Activated T-helper 2 cell treated with anti-CD3 and anti-CD28 coated beads, Interferon-gamma antibody, Interleukin-2, Interleukin-4, amounts not matched to agents 10 μg/mL and 5 μg/mL and 100 μg/mL, durations not matched to agents 14 hours and 24 hours and 36 hours (primary cell): ENCODE measurements at regions of chr11 and their contacts with region 1.

Region 1: GRCh38 chr11:126917531-126918204 is 82.9 kb downstream of the KIRREL3 start:
- DNase-seq: no peak
- H3K4me3 Mint-ChIP-seq: no peak overlapping the region
- H3K27ac Mint-ChIP-seq: peak overlapping the region; percentile 83
- H3K4me1 Mint-ChIP-seq: peaks cover 8% of the 10 kb centered on the region
- H3K27me3 Mint-ChIP-seq: no peaks in the 10 kb centered on the region

Region 2: GRCh38 chr11:126893796-126894195 is 23.9 kb before region 1 on chr11:
- intact Hi-C with region 1: loop called (anchors 1 kb)
- DNase-seq: no peak
- H3K4me3 Mint-ChIP-seq: no peak overlapping the region
- H3K27ac Mint-ChIP-seq: peak overlapping the region; percentile 80
- H3K4me1 Mint-ChIP-seq: peaks cover 8% of the 10 kb centered on the region
- H3K27me3 Mint-ChIP-seq: no peaks in the 10 kb centered on the region